ENCODE measurements at regions of chr17 and their contacts with region 1.

Region 1: DNA sequence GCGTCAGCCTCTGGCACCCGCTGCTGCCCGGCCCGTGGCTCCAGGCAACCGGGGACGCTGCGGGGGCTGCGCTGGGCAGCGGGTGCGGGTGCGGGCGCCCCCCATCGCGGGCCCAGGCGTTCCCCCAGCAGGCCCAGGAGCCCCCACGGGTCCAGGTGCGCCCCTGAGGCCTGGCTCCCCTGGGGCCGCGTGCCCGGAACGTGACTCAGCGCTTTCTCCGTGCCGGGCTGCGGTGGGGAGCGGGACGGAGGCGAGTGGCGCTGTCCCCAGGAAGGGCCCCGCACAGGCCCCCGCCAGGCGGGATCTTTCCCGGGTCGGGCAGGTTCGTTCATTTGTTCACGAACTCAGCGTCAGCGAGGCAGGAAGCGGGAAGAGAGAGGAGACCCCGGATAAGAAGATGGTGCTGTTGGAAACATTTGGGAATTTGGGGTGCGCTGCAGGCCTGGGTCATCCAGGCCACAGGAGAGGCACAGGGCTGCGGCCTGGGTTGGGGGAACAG is 18.4 kb upstream of the EXOC7 start:
- DNase-seq: no peak
- H3K4me3 Mint-ChIP-seq: no peak overlapping the region
- H3K27ac Mint-ChIP-seq: peak overlapping the region; percentile 75
- H3K4me1 Mint-ChIP-seq: peaks cover 43% of the 10 kb centered on the region
- H3K27me3 Mint-ChIP-seq: peaks cover 5% of the 10 kb centered on the region

Region 2: GRCh38 chr17:76048711-76049110 is 73.3 kb before region 1 on chr17:
- CTCF ChIA-PET with region 1: no interaction called
- DNase-seq: no peak
- H3K4me3 Mint-ChIP-seq: no peak overlapping the region
- H3K27ac Mint-ChIP-seq: no peak overlapping the region
- H3K4me1 Mint-ChIP-seq: no peaks in the 10 kb centered on the region
- H3K27me3 Mint-ChIP-seq: no peaks in the 10 kb centered on the region

Region 3: DNA sequence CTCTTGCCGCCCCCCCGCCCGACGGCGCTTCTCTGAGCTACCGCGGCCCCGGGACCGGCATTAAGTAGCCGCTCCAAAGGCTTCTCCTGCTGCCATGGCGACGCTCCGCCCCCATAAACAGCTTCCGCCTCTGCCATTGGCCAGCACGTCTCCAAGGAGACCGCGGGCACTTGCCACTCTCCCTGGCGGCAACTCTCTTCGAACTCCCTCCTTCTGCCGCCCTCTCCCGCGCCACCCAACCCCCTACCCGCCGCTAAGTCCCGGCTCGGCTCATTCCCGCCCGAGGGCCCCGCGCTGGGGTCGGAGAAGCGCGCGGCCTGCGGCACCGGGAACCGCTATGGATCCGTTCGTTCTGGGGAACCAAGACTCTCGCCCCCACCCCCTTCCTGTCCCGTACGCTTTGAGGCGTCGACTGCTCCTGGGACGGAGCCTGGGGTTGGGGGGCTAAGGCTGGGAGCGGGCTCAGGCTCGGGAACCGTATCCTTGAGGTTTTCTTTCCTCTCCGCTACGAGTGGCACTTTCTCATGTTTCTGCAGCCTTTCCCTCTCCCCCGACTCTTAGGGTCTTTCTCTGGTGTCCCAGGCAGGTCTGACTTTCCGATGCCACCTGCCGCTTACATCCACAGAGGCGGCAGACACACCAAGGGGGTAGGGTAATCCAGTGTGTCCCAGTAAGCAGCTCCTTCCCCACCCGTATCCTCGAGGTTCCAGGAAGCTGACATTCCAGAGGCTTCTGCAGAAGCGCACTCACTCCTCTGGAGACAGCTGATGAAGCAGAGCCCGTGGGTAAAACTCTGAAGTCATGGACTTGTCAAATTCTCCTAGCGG is 19.4 kb after region 1 on chr17 and contains the start of gene FOXJ1:
- CTCF ChIA-PET with region 1: interaction called, 11 read pairs
- DNase-seq: peak; percentile 94
- H3K4me3 Mint-ChIP-seq: peak within 1 kb of the TSS; percentile 73
- H3K27ac Mint-ChIP-seq: peak within 1 kb of the TSS; percentile 96
- H3K4me1 Mint-ChIP-seq: peaks cover 66% of the 10 kb centered on the region
- H3K27me3 Mint-ChIP-seq: peaks cover 45% of the 10 kb centered on the region

Region 4: GRCh38 chr17:76271669-76272540 is 149.9 kb after region 1 on chr17:
- CTCF ChIA-PET with region 1: interaction called, 215 read pairs
- DNase-seq: peak; percentile 86
- H3K4me3 Mint-ChIP-seq: peak overlapping the region; percentile 96
- H3K27ac Mint-ChIP-seq: peak overlapping the region; percentile 93
- H3K4me1 Mint-ChIP-seq: peaks cover 68% of the 10 kb centered on the region
- H3K27me3 Mint-ChIP-seq: peaks cover 5% of the 10 kb centered on the region

Region 5: GRCh38 chr17:76314392-76315227 is 192.6 kb after region 1 on chr17:
- CTCF ChIA-PET with region 1: no interaction called
- DNase-seq: no peak
- H3K4me3 Mint-ChIP-seq: no peak overlapping the region
- H3K27ac Mint-ChIP-seq: no peak overlapping the region
- H3K4me1 Mint-ChIP-seq: peaks cover 11% of the 10 kb centered on the region
- H3K27me3 Mint-ChIP-seq: no peaks in the 10 kb centered on the region

Measured in activated naive CD4-positive, alpha-beta T cell treated with anti-CD3 and anti-CD28 coated beads, Interleukin-2, amount 10 ng/mL, durations not matched to agents 7 days and 5 days (primary cell).